ENCODE measurements at regions of chr9 and their contacts with region 1.

Region 1: GRCh38 chr9:95004411-95005277 is 278.1 kb downstream of the AOPEP start:
- DNase-seq: peak; percentile 28 to 59
- ATAC-seq: peak; percentile 51 to 57
- H3K4me3 ChIP-seq: peak overlapping the region; percentile 66 to 84 (median 82)
- H3K27ac ChIP-seq: peak overlapping the region; percentile 95 to 98 (median 97)
- H3K4me1 ChIP-seq: peaks cover 25 to 40% of the 10 kb centered on the region in 2 donors
- H3K27me3 ChIP-seq: no peaks in the 10 kb centered on the region
- CTCF ChIP-seq: peak in 2 of 5 experiments; percentile 17 to 22
- POLR2A ChIP-seq: peak; percentile 57 to 80

Region 2: GRCh38 chr9:94783102-94783664 is 221.5 kb before region 1 on chr9:
- in situ Hi-C with region 1: loop called in 2 of 4 experiments (anchors 10 kb)
- intact Hi-C with region 1: loop called (anchors 1 kb)
- DNase-seq: peak; percentile 92 to 99
- ATAC-seq: peak; percentile 94 to 95
- H3K4me3 ChIP-seq: no peak overlapping the region
- H3K27ac ChIP-seq: peak overlapping the region; percentile 53 to 81 (median 74)
- H3K4me1 ChIP-seq: peaks cover 11 to 26% of the 10 kb centered on the region in 2 donors
- H3K27me3 ChIP-seq: no peaks in the 10 kb centered on the region
- CTCF ChIP-seq: peak; percentile 73 to 81 (median 79)
- POLR2A ChIP-seq: peak in 1 of 2 donors; percentile 32

Region 3: GRCh38 chr9:94867281-94867841 is 137.3 kb before region 1 on chr9:
- in situ Hi-C with region 1: no loop called
- intact Hi-C with region 1: loop called (anchors 2 kb)
- DNase-seq: peak; percentile 61 to 85
- ATAC-seq: peak; percentile 80 to 86
- H3K4me3 ChIP-seq: peak overlapping the region in 3 of 4 donors; percentile 16 to 30 (median 20)
- H3K27ac ChIP-seq: peak overlapping the region; percentile 89 to 96 (median 94)
- H3K4me1 ChIP-seq: peaks cover 73 to 76% of the 10 kb centered on the region in 2 donors
- H3K27me3 ChIP-seq: no peaks in the 10 kb centered on the region
- CTCF ChIP-seq: no peak
- POLR2A ChIP-seq: no peak

Region 4: DNA sequence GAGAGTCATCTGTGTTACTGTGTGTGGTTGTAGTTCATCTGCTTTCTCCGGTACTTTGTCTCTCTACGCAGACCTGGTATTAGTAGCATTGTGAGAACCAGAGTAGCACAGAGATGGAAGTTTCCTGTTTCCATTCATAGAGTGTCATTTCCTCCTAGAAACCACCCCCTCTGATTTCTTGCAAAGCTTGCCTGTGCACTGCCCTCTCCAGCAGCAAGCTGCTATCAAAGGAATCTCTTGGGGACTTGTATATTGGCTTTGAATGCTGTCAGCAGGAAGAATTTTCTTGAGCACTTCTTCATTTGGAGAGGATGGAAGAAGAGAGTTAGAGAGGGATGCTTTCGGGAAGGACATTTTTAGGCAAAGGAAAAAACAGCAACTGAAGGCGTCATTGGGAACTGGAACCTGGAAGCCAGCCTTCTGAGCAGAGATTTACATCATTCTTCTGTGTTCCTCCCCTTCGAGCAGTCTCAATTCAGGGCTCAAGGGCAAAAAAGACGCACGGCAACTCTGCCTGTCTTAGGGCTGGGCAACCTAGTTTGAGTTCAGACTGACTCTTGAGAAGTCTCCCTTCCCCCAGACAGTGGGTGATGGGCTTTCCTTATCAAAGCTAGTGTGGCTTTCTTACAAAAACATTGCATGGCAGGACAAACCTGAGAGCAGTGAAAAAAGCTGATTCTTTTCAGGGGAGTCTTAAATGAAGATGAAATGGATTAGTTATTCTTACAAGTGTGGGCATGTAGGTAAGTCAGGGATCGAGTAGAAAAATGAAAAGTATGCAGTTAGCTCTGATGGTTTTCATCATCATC is 51.9 kb before region 1 on chr9:
- in situ Hi-C with region 1: no loop called
- intact Hi-C with region 1: loop called (anchors 5 kb)
- DNase-seq: no peak
- ATAC-seq: peak; percentile 25 to 33
- H3K4me3 ChIP-seq: no peak overlapping the region
- H3K27ac ChIP-seq: peak overlapping the region; percentile 57 to 74 (median 70)
- H3K4me1 ChIP-seq: peaks cover 51 to 54% of the 10 kb centered on the region in 2 donors
- H3K27me3 ChIP-seq: no peaks in the 10 kb centered on the region
- CTCF ChIP-seq: no peak
- POLR2A ChIP-seq: no peak

Region 5: DNA sequence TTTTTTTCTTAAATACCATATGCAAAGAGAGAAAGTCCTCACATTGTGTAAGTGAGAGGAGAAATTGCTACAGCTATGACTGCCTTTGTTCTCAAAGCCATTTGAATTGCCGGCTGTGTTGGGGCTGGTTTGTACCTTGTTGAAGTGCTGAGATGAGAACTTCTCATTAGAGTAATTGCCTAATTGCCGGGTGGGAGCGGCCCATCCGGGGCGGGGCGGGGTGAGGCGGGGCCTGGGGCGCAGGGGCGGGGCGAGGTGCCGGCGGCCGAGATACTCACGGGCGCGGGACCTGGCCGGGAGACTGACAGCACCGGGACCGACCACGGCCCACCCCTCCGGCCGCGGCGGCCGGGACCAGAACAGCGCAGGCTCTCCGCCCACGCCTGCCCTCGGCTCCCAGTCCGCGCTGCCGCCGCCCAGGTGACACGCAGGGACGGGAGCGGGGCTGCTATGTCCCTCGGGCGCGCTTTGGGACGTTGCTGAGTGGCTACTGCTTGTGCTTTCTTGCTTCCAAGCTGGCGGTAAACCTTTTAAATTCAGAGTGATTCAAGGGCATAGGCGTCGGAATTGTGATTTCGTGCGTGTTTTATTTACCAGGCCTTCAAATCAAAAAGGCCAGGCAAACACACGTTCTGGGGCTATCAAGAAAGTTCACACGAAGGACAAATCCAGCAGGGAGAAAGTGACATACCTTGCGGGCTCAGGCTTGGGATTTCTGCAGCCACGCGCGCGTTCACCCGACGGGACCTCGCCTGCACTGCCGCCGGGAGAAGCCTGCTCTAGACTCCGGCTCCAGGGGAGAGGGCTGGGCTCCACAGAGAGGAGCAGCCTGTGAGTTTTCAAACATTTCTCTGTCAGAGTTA is 43.8 kb after region 1 on chr9:
- in situ Hi-C with region 1: no loop called
- intact Hi-C with region 1: loop called (anchors 2 kb)
- DNase-seq: peak; percentile 57 to 62
- ATAC-seq: peak; percentile 50 to 65
- H3K4me3 ChIP-seq: peak overlapping the region; percentile 59 to 69 (median 64)
- H3K27ac ChIP-seq: peak overlapping the region; percentile 91 to 96 (median 92)
- H3K4me1 ChIP-seq: peaks cover 73 to 76% of the 10 kb centered on the region in 2 donors
- H3K27me3 ChIP-seq: no peaks in the 10 kb centered on the region
- CTCF ChIP-seq: no peak
- POLR2A ChIP-seq: peak; percentile 73 to 89

Region 6: GRCh38 chr9:95092262-95093072 is 87.8 kb after region 1 on chr9:
- in situ Hi-C with region 1: no loop called
- intact Hi-C with region 1: loop called (anchors 5 kb)
- DNase-seq: peak in 1 of 2 donors; percentile 56
- ATAC-seq: peak in 1 of 2 donors; percentile 8
- H3K4me3 ChIP-seq: no peak overlapping the region
- H3K27ac ChIP-seq: peak overlapping the region; percentile 87 to 96 (median 90)
- H3K4me1 ChIP-seq: peaks cover 85% of the 10 kb centered on the region in 2 donors
- H3K27me3 ChIP-seq: no peaks in the 10 kb centered on the region
- CTCF ChIP-seq: no peak
- POLR2A ChIP-seq: no peak

Measured in gastrocnemius medialis (tissue), 4 donors.